ENCODE measurements at regions of chr14 and their contacts with region 1.

Region 1: GRCh38 chr14:24232121-24232644 is at the start of gene NEDD8:
- DNase-seq: peak; percentile 96
- ATAC-seq: peak; percentile 91
- H3K4me3 Mint-ChIP-seq: peak within 1 kb of the TSS; percentile 78
- H3K27ac Mint-ChIP-seq: peak within 1 kb of the TSS; percentile 89
- H3K4me1 Mint-ChIP-seq: peaks cover 58% of the 10 kb centered on the region
- H3K27me3 Mint-ChIP-seq: no peaks in the 10 kb centered on the region
- total RNA-seq, gene NEDD8: 187 to 217 TPM

Region 2: DNA sequence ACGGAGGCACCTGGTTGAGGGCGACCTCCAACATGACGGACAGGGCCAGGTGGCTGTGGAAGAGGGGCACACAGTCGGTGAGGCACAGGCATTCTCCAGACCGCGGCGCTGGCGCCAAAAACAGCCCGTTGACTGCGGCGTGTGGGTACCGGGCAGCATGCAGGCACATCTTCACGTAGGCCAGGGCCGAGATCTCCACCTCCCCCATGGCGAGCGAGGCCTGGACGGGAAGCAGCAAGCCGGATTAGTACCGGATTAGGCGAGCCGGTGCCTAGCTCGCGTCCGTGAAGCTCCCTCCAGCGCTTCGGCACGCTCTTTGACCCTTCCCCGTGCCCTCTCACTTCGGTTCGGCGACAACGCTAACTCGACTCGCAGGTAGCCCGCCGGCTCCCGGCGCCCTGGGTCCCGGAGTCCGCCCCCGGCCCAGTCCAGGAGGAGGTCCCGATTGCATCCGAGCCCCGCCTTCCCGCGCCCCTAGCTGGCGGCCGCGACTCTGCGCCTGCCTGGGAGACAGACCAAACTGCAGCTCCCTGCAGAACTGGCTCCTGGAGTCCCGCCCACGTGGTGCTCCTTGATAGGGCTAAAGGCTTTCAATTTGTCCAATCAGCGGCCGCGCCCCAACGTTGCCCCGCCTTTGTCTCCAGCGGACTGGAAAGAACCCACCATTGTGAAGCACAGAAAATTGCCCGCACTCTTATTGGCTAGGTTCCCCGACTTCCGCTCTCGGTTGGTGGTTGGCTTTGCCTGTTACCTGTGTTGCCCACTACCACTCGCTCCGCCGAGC is 90.9 kb before region 1 on chr14 and contains the start of gene EMC9:
- CTCF ChIA-PET with region 1: no interaction called
- POLR2A ChIA-PET with region 1: no interaction called
- intact Hi-C with region 1: loop called (anchors 1 kb)
- DNase-seq: peak; percentile 100
- ATAC-seq: peak; percentile 87
- H3K4me3 Mint-ChIP-seq: peak within 1 kb of the TSS; percentile 88
- H3K27ac Mint-ChIP-seq: peak within 1 kb of the TSS; percentile 97
- H3K4me1 Mint-ChIP-seq: peaks cover 66% of the 10 kb centered on the region
- H3K27me3 Mint-ChIP-seq: no peaks in the 10 kb centered on the region
- total RNA-seq, gene EMC9: 36.9 to 46.7 TPM

Region 3: DNA sequence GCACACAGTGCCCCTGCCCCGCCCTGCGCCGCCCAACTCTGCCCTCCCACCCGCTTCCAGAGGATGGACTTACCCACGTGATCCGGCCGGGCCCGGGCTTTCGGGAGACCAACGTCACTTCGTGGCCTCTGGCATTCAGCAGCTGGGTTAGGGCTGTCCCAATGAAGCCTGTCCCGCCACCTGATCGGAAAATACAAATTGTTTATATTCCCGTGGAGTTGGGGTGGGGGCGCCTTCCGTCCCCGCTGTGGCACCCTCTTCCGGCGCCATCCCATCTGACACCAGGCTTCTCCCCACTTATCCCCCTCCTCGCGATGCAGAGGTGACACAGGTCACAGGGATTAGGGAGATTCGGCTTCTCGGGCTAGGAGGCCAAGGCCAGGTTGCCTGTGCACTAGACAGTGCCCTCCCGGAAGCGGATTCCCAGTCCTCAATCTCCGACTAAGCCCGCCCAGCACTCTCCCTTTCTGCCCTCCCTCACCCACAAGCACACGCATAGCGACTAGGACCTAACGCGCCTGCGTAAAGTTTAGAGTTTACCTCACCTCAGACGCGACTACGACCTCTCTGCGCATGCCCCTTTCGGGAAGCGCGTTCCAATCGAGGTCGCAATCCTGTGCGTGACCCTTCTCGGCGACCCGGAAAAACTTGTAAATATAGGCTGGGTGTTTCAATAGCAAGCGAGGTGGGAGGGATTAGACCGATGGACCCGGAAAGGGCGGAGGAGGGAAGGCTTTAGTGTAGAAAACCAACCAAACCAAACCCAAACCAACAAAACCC is 210.3 kb after region 1 on chr14 and contains the start of gene SDR39U1:
- CTCF ChIA-PET with region 1: interaction called, 3 read pairs
- POLR2A ChIA-PET with region 1: no interaction called
- intact Hi-C with region 1: loop called (anchors 1 to 5 kb)
- DNase-seq: peak; percentile 98
- ATAC-seq: peak; percentile 92
- H3K4me3 Mint-ChIP-seq: peak within 1 kb of the TSS; percentile 97
- H3K27ac Mint-ChIP-seq: peak within 1 kb of the TSS; percentile 99
- H3K4me1 Mint-ChIP-seq: peaks cover 41% of the 10 kb centered on the region
- H3K27me3 Mint-ChIP-seq: no peaks in the 10 kb centered on the region
- total RNA-seq, gene SDR39U1: 40.9 to 47.8 TPM